SK-N-SH (cell line): ENCODE measurements at regions of chr3 and their contacts with region 1.

Region 1: DNA sequence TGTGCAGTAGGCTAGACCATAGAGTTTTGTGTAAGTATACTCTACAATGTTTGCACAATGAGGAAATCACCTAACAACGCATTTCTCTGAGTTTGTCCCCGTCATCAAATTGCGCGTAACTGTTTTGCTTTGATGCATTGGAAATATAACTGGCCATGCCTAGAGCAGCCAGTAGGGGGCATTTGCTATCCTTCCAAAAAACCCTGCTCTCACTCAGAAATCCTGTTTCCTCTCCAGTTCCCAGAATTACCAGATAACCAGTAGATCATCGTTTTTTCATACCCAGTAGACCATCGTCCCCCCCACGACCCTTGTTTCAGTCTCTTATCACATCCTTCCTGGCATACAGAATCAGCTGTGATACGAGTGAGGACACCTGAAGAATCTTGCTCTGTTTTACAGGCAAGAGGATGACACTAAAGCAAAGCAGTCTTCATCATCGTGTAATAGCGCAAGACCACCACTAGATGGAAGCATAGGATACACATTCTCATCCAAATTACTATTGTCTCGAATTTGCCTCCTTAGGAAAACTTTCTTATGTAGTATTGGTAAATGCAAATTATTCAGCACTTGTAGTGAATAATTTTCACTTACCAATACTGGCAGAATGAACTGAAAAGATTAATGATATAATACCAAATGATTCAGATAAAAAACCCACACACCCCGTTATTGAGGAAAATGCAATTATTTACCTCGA is 4.4 kb upstream of the GABRR3 start:
- DNase-seq: peak; percentile 42
- H3K4me3 ChIP-seq: peak overlapping the region; percentile 48 to 64
- H3K27ac ChIP-seq: no peak overlapping the region
- H3K4me1 ChIP-seq: no peaks in the 10 kb centered on the region; a peak in 1 of 4 replicates
- H3K27me3 ChIP-seq: no peaks in the 10 kb centered on the region
- CTCF ChIP-seq: peak; percentile 96
- EP300 ChIP-seq: no peak
- RAD21 ChIP-seq: peak; percentile 81

Region 2: DNA sequence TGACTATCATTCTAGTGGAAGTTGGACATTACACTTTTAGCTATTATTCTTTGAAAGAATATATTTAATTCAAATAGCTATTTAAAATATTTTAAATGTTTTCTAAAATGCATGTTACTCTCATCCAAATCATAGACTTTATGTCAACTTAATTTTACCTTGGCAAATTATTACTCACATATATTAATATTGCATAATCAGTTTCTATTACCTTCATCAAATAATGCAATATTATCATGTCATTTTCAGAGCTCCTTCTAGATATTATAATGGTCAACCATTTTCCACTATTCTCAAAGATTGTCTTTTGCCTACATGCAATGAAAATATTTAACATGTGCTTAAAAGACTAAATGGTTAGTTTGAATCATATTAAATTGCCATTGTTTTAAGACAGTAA is 291.8 kb before region 1 on chr3:
- CTCF ChIA-PET with region 1: no interaction called
- POLR2A ChIA-PET with region 1: no interaction called
- DNase-seq: no peak
- H3K4me3 ChIP-seq: no peak overlapping the region
- H3K27ac ChIP-seq: no peak overlapping the region
- H3K4me1 ChIP-seq: no peaks in the 10 kb centered on the region
- H3K27me3 ChIP-seq: no peaks in the 10 kb centered on the region
- CTCF ChIP-seq: no peak
- EP300 ChIP-seq: no peak
- RAD21 ChIP-seq: no peak

Region 3: GRCh38 chr3:97932387-97932801 is 107.1 kb before region 1 on chr3:
- CTCF ChIA-PET with region 1: no interaction called
- POLR2A ChIA-PET with region 1: no interaction called
- DNase-seq: no peak
- H3K4me3 ChIP-seq: no peak overlapping the region
- H3K27ac ChIP-seq: no peak overlapping the region
- H3K4me1 ChIP-seq: no peaks in the 10 kb centered on the region
- H3K27me3 ChIP-seq: no peaks in the 10 kb centered on the region
- CTCF ChIP-seq: no peak
- EP300 ChIP-seq: no peak
- RAD21 ChIP-seq: no peak

Region 4: DNA sequence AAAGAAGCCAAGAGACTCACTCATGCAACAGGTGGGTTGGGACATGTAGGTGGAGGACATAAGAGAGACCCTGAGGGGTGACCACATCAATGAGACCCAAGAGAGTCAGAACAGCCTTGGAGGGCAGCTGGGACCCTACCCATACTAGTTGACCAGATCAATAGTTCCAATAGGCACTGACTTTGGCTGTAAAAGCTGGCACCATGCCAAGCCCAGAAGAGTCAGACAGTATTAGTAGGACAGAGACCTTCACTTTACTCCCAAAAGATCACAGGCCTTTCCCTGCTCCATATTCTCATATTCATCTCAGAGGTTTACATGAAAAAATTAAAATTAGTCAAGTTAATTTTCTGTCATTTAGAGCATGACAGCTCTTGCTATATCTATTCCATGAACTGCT is 16.6 kb after region 1 on chr3:
- CTCF ChIA-PET with region 1: interaction called, 17 read pairs
- POLR2A ChIA-PET with region 1: no interaction called
- DNase-seq: no peak
- H3K4me3 ChIP-seq: no peak overlapping the region
- H3K27ac ChIP-seq: no peak overlapping the region
- H3K4me1 ChIP-seq: no peaks in the 10 kb centered on the region
- H3K27me3 ChIP-seq: no peaks in the 10 kb centered on the region
- CTCF ChIP-seq: no peak
- EP300 ChIP-seq: no peak
- RAD21 ChIP-seq: no peak

Region 5: GRCh38 chr3:98322101-98322500 is 282.6 kb after region 1 on chr3:
- CTCF ChIA-PET with region 1: interaction called, 12 read pairs
- POLR2A ChIA-PET with region 1: no interaction called
- DNase-seq: no peak
- H3K4me3 ChIP-seq: no peak overlapping the region
- H3K27ac ChIP-seq: no peak overlapping the region
- H3K4me1 ChIP-seq: no peaks in the 10 kb centered on the region
- H3K27me3 ChIP-seq: no peaks in the 10 kb centered on the region; the same call in 1 of the 2 replicates
- CTCF ChIP-seq: no peak
- EP300 ChIP-seq: no peak
- RAD21 ChIP-seq: no peak

Region 6: DNA sequence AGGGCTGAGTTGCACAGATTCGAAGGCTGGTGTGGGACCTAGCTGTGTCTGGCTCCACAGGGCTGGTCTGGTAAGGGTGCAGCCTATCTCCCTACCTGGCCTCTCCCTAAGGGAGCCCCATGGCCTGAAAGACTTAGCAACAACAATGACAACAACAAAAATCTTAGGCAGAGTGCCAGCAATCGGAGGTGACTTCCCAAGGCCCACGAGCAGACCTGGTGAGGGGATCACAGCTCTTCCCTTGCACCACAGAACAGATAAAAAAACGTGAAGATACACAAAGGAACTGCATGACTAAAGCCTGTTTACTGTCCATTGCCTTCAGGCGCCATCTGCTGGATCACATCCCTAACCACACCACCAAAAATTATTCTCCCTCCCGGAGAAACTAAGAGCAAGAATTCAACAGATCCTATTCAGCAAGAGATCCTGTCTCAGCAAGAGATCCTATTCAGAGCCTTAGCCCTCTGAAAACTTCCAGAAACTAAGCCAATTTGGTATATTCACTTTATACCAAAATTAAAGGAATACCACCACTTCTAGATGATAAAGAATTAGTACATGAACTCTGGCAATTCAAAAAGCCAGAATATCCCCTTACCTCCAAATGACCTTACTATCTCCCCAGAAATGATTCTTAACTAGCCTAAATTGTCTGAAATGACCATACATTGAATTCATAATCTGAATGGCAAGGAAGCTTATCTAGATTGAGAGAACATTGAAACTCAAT is 290.1 kb after region 1 on chr3:
- CTCF ChIA-PET with region 1: interaction called, 82 read pairs
- POLR2A ChIA-PET with region 1: no interaction called
- DNase-seq: peak; percentile 32
- H3K4me3 ChIP-seq: no peak overlapping the region; a peak in 1 of 4 replicates
- H3K27ac ChIP-seq: no peak overlapping the region
- H3K4me1 ChIP-seq: no peaks in the 10 kb centered on the region
- H3K27me3 ChIP-seq: peaks cover 4% of the 10 kb centered on the region; the same call in 1 of the 2 replicates
- CTCF ChIP-seq: peak; percentile 81
- EP300 ChIP-seq: no peak
- RAD21 ChIP-seq: peak; percentile 78

Region 7: GRCh38 chr3:98343647-98344507 is 304.4 kb after region 1 on chr3:
- CTCF ChIA-PET with region 1: interaction called, 18 read pairs
- POLR2A ChIA-PET with region 1: no interaction called
- DNase-seq: peak; percentile 22
- H3K4me3 ChIP-seq: peak overlapping the region in 1 of 2 experiments; percentile 55; a peak in 1 of 4 replicates
- H3K27ac ChIP-seq: no peak overlapping the region
- H3K4me1 ChIP-seq: no peaks in the 10 kb centered on the region
- H3K27me3 ChIP-seq: no peaks in the 10 kb centered on the region
- CTCF ChIP-seq: peak; percentile 74
- EP300 ChIP-seq: no peak
- RAD21 ChIP-seq: peak; percentile 54